CD4-positive, alpha-beta T cell (primary cell): ENCODE measurements at regions of chr9 and their contacts with region 1.

Region 1: GRCh38 chr9:89455356-89455824 is 42.5 kb downstream of the SEMA4D start:
- DNase-seq: peak in 8 of 14 experiments; percentile 47 to 81 (median 62)
- ATAC-seq: peak; percentile 65
- H3K4me3 ChIP-seq: peak overlapping the region; percentile 13
- H3K4me3 Mint-ChIP-seq: peak overlapping the region; percentile 71
- H3K27ac ChIP-seq: peak overlapping the region; percentile 68 to 79
- H3K27ac Mint-ChIP-seq: peak overlapping the region; percentile 96
- H3K4me1 ChIP-seq: peaks cover 86% of the 10 kb centered on the region
- H3K4me1 Mint-ChIP-seq: peaks cover 91% of the 10 kb centered on the region
- H3K27me3 ChIP-seq: no peaks in the 10 kb centered on the region
- H3K27me3 Mint-ChIP-seq: no peaks in the 10 kb centered on the region
- CTCF ChIP-seq: no peak

Region 2: DNA sequence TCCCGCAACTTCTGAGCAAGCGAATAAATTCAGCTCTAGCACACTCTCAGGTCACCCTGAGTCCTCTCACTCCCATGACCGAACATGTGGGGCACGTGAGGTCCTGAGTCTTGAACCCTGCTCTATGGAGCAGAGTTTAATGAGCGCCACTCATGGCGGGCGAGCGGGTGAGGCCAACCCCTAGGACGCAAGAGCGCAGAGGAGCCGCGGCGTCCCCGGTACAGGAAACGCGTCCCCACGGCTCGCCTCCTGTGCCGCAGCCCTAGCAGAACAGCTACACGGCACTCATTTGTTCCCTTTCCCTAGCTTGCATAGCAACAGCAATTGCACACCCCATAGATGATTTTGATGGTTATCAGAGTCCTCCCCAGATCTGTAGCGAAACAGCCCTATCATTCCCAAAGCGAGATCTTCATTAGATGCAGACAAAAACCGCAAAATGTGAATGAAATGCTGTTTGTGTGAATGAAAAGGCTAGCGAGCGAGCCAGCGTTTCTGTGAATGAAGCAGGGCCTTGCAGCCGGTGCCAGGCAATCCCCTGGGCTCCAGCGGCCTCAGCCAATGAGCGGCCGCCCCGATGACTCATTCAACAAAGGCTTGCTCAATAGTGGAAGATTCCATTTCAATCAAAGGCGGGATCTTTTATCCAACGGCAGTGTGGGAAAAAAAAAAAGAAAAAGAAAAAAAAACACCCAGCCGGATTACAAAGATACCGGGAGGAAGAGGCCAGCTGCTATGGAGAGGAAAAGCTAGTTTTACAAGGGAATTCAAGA is 275.3 kb before region 1 on chr9:
- CTCF ChIA-PET with region 1: no interaction called
- POLR2A ChIA-PET with region 1: no interaction called
- intact Hi-C with region 1: no loop called
- DNase-seq: peak in 6 of 14 experiments; percentile 3 to 37 (median 10)
- ATAC-seq: no peak
- H3K4me3 ChIP-seq: no peak overlapping the region
- H3K4me3 Mint-ChIP-seq: peak overlapping the region; percentile 60
- H3K27ac ChIP-seq: no peak overlapping the region
- H3K27ac Mint-ChIP-seq: no peak overlapping the region
- H3K4me1 ChIP-seq: peaks cover 14% of the 10 kb centered on the region
- H3K4me1 Mint-ChIP-seq: peaks cover 13% of the 10 kb centered on the region
- H3K27me3 ChIP-seq: peaks cover 29 to 51% of the 10 kb centered on the region in 2 experiments
- H3K27me3 Mint-ChIP-seq: peaks cover 62% of the 10 kb centered on the region
- CTCF ChIP-seq: no peak

Region 3: DNA sequence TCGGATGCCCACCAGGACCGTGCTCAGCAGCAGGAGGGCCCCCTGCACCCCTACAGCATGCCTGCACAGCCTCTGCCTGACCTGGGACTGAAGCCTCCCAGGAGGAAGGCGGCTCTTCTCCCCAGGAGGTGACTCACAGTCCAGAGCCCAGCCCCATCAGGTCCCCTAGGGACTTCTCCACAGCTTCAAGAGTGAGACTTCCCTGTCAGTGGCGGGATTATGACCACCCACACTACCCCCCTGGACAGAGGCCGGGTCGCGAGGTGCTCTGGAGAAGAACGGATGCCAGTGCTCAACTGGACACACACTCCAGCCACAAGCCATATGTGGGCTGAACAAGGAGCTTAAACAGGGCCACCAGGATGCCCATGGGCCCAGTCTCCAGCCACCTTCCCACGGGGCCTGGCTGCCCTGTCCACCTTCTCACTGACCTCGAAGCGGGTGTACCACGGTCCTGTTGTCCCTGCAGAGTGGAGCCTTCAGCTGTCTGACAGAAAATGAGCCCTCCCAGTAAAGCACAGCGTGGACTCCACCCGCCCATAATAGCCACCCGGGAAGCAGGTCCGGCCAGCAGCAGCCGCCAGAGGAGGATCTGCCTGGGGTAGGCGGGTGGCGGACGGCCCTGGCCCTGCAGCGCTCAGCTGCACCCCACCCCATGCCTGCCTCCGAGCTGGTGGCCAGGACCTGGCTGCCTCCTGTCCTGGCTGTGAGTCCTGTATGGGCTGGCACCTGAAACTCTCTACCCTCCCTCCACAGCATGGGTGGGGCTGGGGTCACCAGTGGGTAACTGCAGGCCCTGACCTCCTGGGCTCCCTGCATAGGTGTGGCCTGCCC is 12.2 kb before region 1 on chr9:
- CTCF ChIA-PET with region 1: interaction called, 4 read pairs
- POLR2A ChIA-PET with region 1: interaction called, 35 read pairs
- intact Hi-C with region 1: no loop called
- DNase-seq: peak in 2 of 14 experiments; percentile 49 to 60
- ATAC-seq: no peak
- H3K4me3 ChIP-seq: no peak overlapping the region
- H3K4me3 Mint-ChIP-seq: no peak overlapping the region
- H3K27ac ChIP-seq: peak overlapping the region; percentile 66 to 71
- H3K27ac Mint-ChIP-seq: peak overlapping the region; percentile 96
- H3K4me1 ChIP-seq: peaks cover 99% of the 10 kb centered on the region
- H3K4me1 Mint-ChIP-seq: peaks cover 86% of the 10 kb centered on the region
- H3K27me3 ChIP-seq: no peaks in the 10 kb centered on the region
- H3K27me3 Mint-ChIP-seq: no peaks in the 10 kb centered on the region
- CTCF ChIP-seq: no peak

Region 4: DNA sequence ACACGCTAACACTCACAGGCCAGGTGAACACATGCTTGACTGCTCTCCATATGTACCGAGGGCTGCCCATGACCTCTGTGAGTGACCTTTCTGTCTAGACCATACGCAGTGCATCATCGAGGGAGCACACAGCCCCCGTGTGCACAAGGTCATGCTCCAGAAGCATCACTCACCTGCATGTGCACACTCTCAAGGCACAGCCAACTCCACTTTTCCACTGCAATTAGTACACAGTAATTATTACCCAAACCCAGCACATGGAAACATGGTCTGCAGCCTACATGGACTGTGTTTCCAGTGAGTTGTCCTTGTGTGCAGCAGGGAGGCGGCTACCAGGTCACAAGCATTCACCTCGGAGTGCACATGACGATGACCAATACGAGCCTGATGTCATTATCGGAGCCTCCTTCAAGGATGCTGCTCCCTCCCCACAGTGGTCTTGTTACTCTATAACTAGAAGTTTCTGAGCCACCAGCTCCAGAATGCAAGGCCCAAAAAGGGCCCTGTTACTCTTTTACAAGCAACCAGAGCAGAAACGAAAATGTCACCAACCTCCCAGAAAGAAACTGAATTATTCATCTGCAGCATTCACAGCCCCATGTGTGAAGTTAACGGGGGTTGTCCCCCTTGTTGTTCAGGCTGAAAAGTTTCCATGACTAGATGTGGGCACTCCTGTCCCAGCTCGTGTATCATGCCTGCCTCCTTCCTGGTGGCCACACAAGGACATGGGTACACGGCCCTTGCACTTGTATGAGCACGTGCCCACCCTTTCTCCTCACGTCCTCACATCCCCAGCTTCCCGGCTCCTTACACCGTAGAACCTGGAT is 11.3 kb after region 1 on chr9:
- CTCF ChIA-PET with region 1: interaction called, 6 read pairs
- POLR2A ChIA-PET with region 1: interaction called, 44 read pairs
- intact Hi-C with region 1: loop called in 1 of 2 experiments (anchors 1 kb)
- DNase-seq: peak in 2 of 14 experiments; percentile 43 to 52
- ATAC-seq: peak; percentile 2
- H3K4me3 ChIP-seq: peak overlapping the region; percentile 12
- H3K4me3 Mint-ChIP-seq: peak overlapping the region; percentile 76
- H3K27ac ChIP-seq: peak overlapping the region; percentile 64 to 84
- H3K27ac Mint-ChIP-seq: peak overlapping the region; percentile 96
- H3K4me1 ChIP-seq: peaks cover 93% of the 10 kb centered on the region
- H3K4me1 Mint-ChIP-seq: peaks cover 97% of the 10 kb centered on the region
- H3K27me3 ChIP-seq: no peaks in the 10 kb centered on the region
- H3K27me3 Mint-ChIP-seq: no peaks in the 10 kb centered on the region
- CTCF ChIP-seq: no peak

Region 5: GRCh38 chr9:89477811-89478630 is 22.6 kb after region 1 on chr9:
- CTCF ChIA-PET with region 1: interaction called, 4 read pairs
- POLR2A ChIA-PET with region 1: interaction called, 44 read pairs
- intact Hi-C with region 1: no loop called
- DNase-seq: peak in 10 of 14 experiments; percentile 41 to 79 (median 65)
- ATAC-seq: peak; percentile 55
- H3K4me3 ChIP-seq: peak overlapping the region; percentile 51
- H3K4me3 Mint-ChIP-seq: peak overlapping the region; percentile 85
- H3K27ac ChIP-seq: peak overlapping the region; percentile 54 to 73
- H3K27ac Mint-ChIP-seq: peak overlapping the region; percentile 97
- H3K4me1 ChIP-seq: peaks cover 96% of the 10 kb centered on the region
- H3K4me1 Mint-ChIP-seq: peaks cover 91% of the 10 kb centered on the region
- H3K27me3 ChIP-seq: no peaks in the 10 kb centered on the region
- H3K27me3 Mint-ChIP-seq: no peaks in the 10 kb centered on the region
- CTCF ChIP-seq: no peak

Region 6: GRCh38 chr9:89483592-89484522 is 28.5 kb after region 1 on chr9:
- CTCF ChIA-PET with region 1: interaction called, 4 read pairs
- POLR2A ChIA-PET with region 1: interaction called, 44 read pairs
- intact Hi-C with region 1: no loop called
- DNase-seq: peak in 13 of 14 experiments; percentile 54 to 87 (median 70)
- ATAC-seq: peak; percentile 72
- H3K4me3 ChIP-seq: peak overlapping the region; percentile 72
- H3K4me3 Mint-ChIP-seq: peak overlapping the region; percentile 94
- H3K27ac ChIP-seq: peak overlapping the region; percentile 52 to 67
- H3K27ac Mint-ChIP-seq: peak overlapping the region; percentile 88
- H3K4me1 ChIP-seq: peaks cover 77% of the 10 kb centered on the region
- H3K4me1 Mint-ChIP-seq: peaks cover 91% of the 10 kb centered on the region
- H3K27me3 ChIP-seq: no peaks in the 10 kb centered on the region
- H3K27me3 Mint-ChIP-seq: no peaks in the 10 kb centered on the region
- CTCF ChIP-seq: no peak

Region 7: GRCh38 chr9:89489548-89490530 is 34.4 kb after region 1 on chr9:
- CTCF ChIA-PET with region 1: interaction called, 4 read pairs
- POLR2A ChIA-PET with region 1: interaction called, 22 read pairs
- intact Hi-C with region 1: loop called in 1 of 2 experiments (anchors 5 kb)
- DNase-seq: peak in 4 of 14 experiments; percentile 33 to 92 (median 89)
- ATAC-seq: peak; percentile 84
- H3K4me3 ChIP-seq: peak overlapping the region; percentile 0
- H3K4me3 Mint-ChIP-seq: peak overlapping the region; percentile 76
- H3K27ac ChIP-seq: peak overlapping the region; percentile 65 to 67
- H3K27ac Mint-ChIP-seq: peak overlapping the region; percentile 88
- H3K4me1 ChIP-seq: peaks cover 76% of the 10 kb centered on the region
- H3K4me1 Mint-ChIP-seq: peaks cover 92% of the 10 kb centered on the region
- H3K27me3 ChIP-seq: no peaks in the 10 kb centered on the region
- H3K27me3 Mint-ChIP-seq: no peaks in the 10 kb centered on the region
- CTCF ChIP-seq: no peak

Region 8: DNA sequence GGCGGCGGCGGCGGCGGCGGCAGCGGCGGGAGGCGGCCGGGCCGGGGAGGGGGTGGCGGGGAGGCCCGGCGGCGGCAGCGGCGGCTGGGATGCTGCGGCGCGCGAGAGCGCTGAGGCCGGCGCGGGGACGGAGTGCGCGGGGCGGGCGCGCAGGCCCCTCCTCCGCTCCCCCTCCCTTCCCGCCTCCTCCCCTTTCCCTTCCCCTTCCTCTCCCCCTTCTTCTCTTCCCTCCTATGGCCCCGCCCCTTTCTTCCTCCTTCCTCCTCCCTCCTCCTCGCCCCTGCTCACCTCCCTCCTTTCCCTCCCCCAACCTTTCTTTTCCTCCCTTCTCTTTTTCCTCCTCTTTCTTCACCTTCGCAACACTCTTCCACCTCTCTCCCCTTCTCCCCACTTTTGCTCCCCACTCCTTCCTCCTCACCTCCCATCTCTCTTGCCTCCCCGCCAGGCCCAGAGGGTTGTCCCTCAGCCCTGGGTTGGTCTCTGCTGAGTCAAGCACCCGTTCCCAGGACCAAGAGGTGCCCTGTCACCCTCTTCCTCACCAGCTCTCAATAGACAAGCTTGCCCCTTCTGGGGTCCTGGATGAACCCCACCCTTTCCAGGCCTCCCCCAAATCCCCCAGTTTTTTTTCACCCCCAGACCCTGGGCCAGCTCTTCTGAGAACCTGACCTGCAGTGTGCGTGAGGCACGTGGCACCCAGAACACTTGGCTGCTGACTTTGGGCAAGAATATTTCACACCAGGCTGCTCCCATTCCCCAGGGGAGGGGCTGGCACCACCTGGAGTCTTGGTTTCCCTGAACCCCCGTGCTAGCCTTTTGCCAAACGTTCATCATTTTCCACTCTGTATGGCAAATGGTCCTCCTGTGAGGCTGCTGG is 42.8 kb after region 1 on chr9 and contains the start of gene SEMA4D:
- CTCF ChIA-PET with region 1: interaction called, 3 read pairs
- POLR2A ChIA-PET with region 1: interaction called, 8 read pairs
- intact Hi-C with region 1: loop called (anchors 2 to 5 kb)
- DNase-seq: peak in 12 of 14 experiments; percentile 37 to 84 (median 58)
- ATAC-seq: peak; percentile 4
- H3K4me3 ChIP-seq: peak within 1 kb of the TSS; percentile 83
- H3K4me3 Mint-ChIP-seq: peak within 1 kb of the TSS; percentile 100
- H3K27ac ChIP-seq: peak within 1 kb of the TSS; percentile 60 to 68
- H3K27ac Mint-ChIP-seq: peak within 1 kb of the TSS; percentile 90
- H3K4me1 ChIP-seq: peaks cover 84% of the 10 kb centered on the region
- H3K4me1 Mint-ChIP-seq: peaks cover 92% of the 10 kb centered on the region
- H3K27me3 ChIP-seq: no peaks in the 10 kb centered on the region
- H3K27me3 Mint-ChIP-seq: no peaks in the 10 kb centered on the region
- CTCF ChIP-seq: no peak
- total RNA-seq, gene SEMA4D: 399 to 430 TPM